ENCODE measurements at regions of chr17 and their contacts with region 1.

Region 1: GRCh38 chr17:74972107-74972972 is at the start of gene HID1:
- DNase-seq: peak; percentile 96
- H3K4me3 ChIP-seq: peak within 1 kb of the TSS; percentile 54 to 70
- H3K27ac ChIP-seq: peak within 1 kb of the TSS in 1 of 2 experiments; percentile 85; a peak in 2 of 4 replicates
- H3K4me1 ChIP-seq: peaks cover 0 to 22% of the 10 kb centered on the region in 2 experiments; a peak in 1 of 4 replicates
- H3K27me3 ChIP-seq: peaks cover 26% of the 10 kb centered on the region
- CTCF ChIP-seq: no peak
- EP300 ChIP-seq: no peak
- RAD21 ChIP-seq: no peak
- polyA plus RNA-seq, gene HID1: 2.5 and 2.9 TPM in 2 replicates

Region 2: GRCh38 chr17:75034236-75034908 is 62.0 kb after region 1 on chr17:
- CTCF ChIA-PET with region 1: interaction called, 12 read pairs
- POLR2A ChIA-PET with region 1: interaction called, 10 read pairs
- DNase-seq: peak; percentile 81
- H3K4me3 ChIP-seq: peak overlapping the region; percentile 67 to 98
- H3K27ac ChIP-seq: peak overlapping the region; percentile 90 to 92
- H3K4me1 ChIP-seq: peaks cover 0 to 22% of the 10 kb centered on the region in 2 experiments; a peak in 1 of 4 replicates
- H3K27me3 ChIP-seq: no peaks in the 10 kb centered on the region
- CTCF ChIP-seq: peak; percentile 49
- EP300 ChIP-seq: peak in 1 of 2 experiments; percentile 12; a peak in 1 of 4 replicates
- RAD21 ChIP-seq: no peak